ENCODE measurements at regions of chr1 and their contacts with region 1.

Region 1: DNA sequence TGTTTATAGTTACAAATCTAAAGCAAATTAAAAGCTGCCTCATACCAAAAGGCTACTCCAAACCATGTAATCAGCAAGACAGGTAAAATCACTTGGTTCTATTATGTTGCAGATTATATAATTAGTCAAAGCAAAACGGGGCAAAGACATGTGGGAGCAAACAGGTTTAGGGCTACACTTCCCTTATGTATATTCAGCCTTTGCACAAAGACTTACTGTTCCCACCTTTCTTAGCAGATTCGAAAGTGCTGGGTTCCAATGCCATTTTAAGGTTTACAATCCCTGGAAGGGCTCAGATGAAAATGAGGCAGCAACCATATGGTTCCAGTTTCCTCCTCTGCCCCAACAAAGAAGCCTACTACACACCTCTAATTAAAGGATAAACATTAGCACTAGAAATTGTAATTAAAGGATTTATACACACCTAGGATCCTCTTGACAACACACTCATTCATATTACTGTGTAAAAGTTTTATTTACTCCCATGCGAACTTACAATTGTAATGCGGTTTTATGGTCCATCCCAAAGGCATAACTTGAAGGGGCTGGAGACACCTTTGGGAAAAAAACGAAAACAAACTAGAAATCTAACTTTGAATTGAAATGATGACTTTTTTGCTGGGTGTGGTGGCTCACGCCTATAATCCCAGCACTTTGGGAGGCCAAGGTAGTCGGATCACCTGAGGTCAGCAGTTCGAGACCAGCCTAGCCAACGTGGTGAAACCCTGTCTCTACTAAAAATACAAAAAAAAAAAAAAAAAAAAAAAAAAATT is 117.3 kb upstream of the PKN2 start:
- DNase-seq: no peak
- ATAC-seq: no peak
- H3K4me3 ChIP-seq: no peak overlapping the region
- H3K27ac ChIP-seq: no peak overlapping the region
- H3K4me1 ChIP-seq: no peaks in the 10 kb centered on the region
- H3K27me3 ChIP-seq: peaks cover 0 to 1% of the 10 kb centered on the region in 2 experiments; a peak in 3 of 4 replicates
- CTCF ChIP-seq: no peak
- EP300 ChIP-seq: no peak
- POLR2A ChIP-seq: no peak
- RAD21 ChIP-seq: no peak

Region 2: GRCh38 chr1:88266051-88266450 is 300.8 kb before region 1 on chr1:
- CTCF ChIA-PET with region 1: no interaction called
- POLR2A ChIA-PET with region 1: no interaction called
- RAD21 ChIA-PET with region 1: no interaction called
- SMC1A ChIA-PET with region 1: no interaction called
- in situ Hi-C with region 1: no loop called
- intact Hi-C with region 1: loop called (anchors 10 kb)
- DNase-seq: no peak
- ATAC-seq: no peak
- H3K4me3 ChIP-seq: no peak overlapping the region
- H3K27ac ChIP-seq: no peak overlapping the region
- H3K4me1 ChIP-seq: no peaks in the 10 kb centered on the region
- H3K27me3 ChIP-seq: no peaks in the 10 kb centered on the region
- CTCF ChIP-seq: no peak
- EP300 ChIP-seq: no peak
- POLR2A ChIP-seq: no peak
- RAD21 ChIP-seq: no peak

Region 3: GRCh38 chr1:88357729-88358128 is 209.1 kb before region 1 on chr1:
- CTCF ChIA-PET with region 1: no interaction called
- POLR2A ChIA-PET with region 1: no interaction called
- RAD21 ChIA-PET with region 1: no interaction called
- SMC1A ChIA-PET with region 1: no interaction called
- in situ Hi-C with region 1: no loop called
- intact Hi-C with region 1: no loop called
- DNase-seq: no peak
- ATAC-seq: no peak
- H3K4me3 ChIP-seq: no peak overlapping the region
- H3K27ac ChIP-seq: no peak overlapping the region
- H3K4me1 ChIP-seq: no peaks in the 10 kb centered on the region
- H3K27me3 ChIP-seq: no peaks in the 10 kb centered on the region
- CTCF ChIP-seq: no peak
- EP300 ChIP-seq: no peak
- POLR2A ChIP-seq: no peak
- RAD21 ChIP-seq: no peak

Measured in GM12878 (cell line).